ENCODE measurements at regions of chr11 and their contacts with region 1.

Region 1: GRCh38 chr11:36131721-36132397 is 157.4 kb downstream of the COMMD9 start:
- DNase-seq: peak; percentile 24 to 68
- ATAC-seq: peak; percentile 77 to 92 (median 83)
- H3K4me3 ChIP-seq: no peak overlapping the region
- H3K27ac ChIP-seq: peak overlapping the region in 2 of 10 donors; percentile 15 to 44
- H3K4me1 ChIP-seq: peaks cover 0 to 15% (median 0%) of the 10 kb centered on the region in 9 donors
- H3K27me3 ChIP-seq: peaks cover 0 to 22% (median 6%) of the 10 kb centered on the region in 7 donors
- CTCF ChIP-seq: peak; percentile 47 to 87 (median 75)

Region 2: DNA sequence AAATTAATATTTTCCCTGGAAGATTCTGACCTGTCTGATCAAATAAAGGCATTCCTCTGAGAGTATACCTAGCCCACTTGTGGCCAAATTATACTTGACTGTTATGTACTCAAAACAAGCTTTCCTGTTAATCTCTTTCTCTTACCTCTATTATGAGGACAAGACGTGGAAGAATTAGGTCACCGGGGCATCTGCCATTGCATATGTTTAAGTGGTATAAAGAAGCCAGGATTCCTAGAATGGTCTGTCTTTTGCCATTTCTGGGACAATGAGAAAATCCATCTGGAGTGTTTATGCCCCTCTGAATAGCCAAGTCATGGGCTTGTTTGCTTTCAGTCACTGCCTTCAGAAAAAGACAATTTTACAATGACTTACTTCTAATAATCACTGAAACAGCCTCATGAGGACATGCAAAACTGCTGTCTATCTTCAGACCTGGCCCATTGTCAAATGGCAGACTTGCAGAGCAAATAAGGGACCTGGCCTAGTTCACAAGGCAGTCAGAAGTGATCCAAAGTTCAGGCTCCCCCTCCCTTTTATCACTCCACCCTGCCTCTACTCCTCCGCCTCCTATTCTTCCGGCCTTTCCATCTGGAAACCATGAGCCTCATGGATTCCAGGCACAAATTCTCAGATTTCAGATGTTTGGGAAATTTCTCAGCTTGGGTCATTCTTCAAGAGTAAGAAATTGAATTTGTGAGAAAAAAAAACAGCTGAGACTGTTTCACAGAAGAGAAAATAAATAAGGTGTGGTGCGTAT is 316.1 kb before region 1 on chr11:
- intact Hi-C with region 1: loop called in 7 of 10 experiments (anchors 5 to 10 kb)
- DNase-seq: peak in 1 of 2 donors; percentile 57
- ATAC-seq: peak in 7 of 8 donors; percentile 67 to 82 (median 73)
- H3K4me3 ChIP-seq: no peak overlapping the region
- H3K27ac ChIP-seq: peak overlapping the region in 3 of 10 donors; percentile 10 to 25 (median 17)
- H3K4me1 ChIP-seq: peaks cover 15 to 60% (median 42%) of the 10 kb centered on the region in 9 donors
- H3K27me3 ChIP-seq: no peaks in the 10 kb centered on the region
- CTCF ChIP-seq: no peak

Region 3: GRCh38 chr11:35838071-35838470 is 293.8 kb before region 1 on chr11:
- intact Hi-C with region 1: loop called in 1 of 10 experiments (anchors 10 kb)
- DNase-seq: no peak
- ATAC-seq: no peak
- H3K4me3 ChIP-seq: no peak overlapping the region
- H3K27ac ChIP-seq: no peak overlapping the region
- H3K4me1 ChIP-seq: no peaks in the 10 kb centered on the region
- H3K27me3 ChIP-seq: no peaks in the 10 kb centered on the region
- CTCF ChIP-seq: no peak

Region 4: GRCh38 chr11:36034551-36035331 is 97.1 kb before region 1 on chr11:
- intact Hi-C with region 1: loop called in 1 of 10 experiments (anchors 10 kb)
- DNase-seq: no peak
- ATAC-seq: no peak
- H3K4me3 ChIP-seq: no peak overlapping the region
- H3K27ac ChIP-seq: no peak overlapping the region
- H3K4me1 ChIP-seq: peaks cover 0 to 28% (median 0%) of the 10 kb centered on the region in 9 donors
- H3K27me3 ChIP-seq: peaks cover 0 to 3% (median 0%) of the 10 kb centered on the region in 7 donors
- CTCF ChIP-seq: no peak

Region 5: GRCh38 chr11:36186340-36187175 is 54.7 kb after region 1 on chr11:
- intact Hi-C with region 1: no loop called
- DNase-seq: no peak
- ATAC-seq: peak in 6 of 8 donors; percentile 54 to 81 (median 69)
- H3K4me3 ChIP-seq: no peak overlapping the region
- H3K27ac ChIP-seq: no peak overlapping the region
- H3K4me1 ChIP-seq: peaks cover 0 to 10% (median 5%) of the 10 kb centered on the region in 9 donors
- H3K27me3 ChIP-seq: no peaks in the 10 kb centered on the region
- CTCF ChIP-seq: no peak

Region 6: GRCh38 chr11:36258730-36259360 is 127.0 kb after region 1 on chr11:
- intact Hi-C with region 1: loop called in 4 of 10 experiments (anchors 10 kb)
- DNase-seq: peak; percentile 31 to 44
- ATAC-seq: peak; percentile 74 to 88 (median 85)
- H3K4me3 ChIP-seq: no peak overlapping the region
- H3K27ac ChIP-seq: no peak overlapping the region
- H3K4me1 ChIP-seq: peaks cover 0 to 9% (median 0%) of the 10 kb centered on the region in 9 donors
- H3K27me3 ChIP-seq: peaks cover 0 to 33% (median 7%) of the 10 kb centered on the region in 7 donors
- CTCF ChIP-seq: peak; percentile 19 to 71 (median 63)

Measured in heart right ventricle (tissue), 16 donors.